Activated B cell treated with CpG ODN at 0.5 μM for 24 hours (primary cell): ENCODE measurements at regions of chr6 and their contacts with region 1.

Region 1: DNA sequence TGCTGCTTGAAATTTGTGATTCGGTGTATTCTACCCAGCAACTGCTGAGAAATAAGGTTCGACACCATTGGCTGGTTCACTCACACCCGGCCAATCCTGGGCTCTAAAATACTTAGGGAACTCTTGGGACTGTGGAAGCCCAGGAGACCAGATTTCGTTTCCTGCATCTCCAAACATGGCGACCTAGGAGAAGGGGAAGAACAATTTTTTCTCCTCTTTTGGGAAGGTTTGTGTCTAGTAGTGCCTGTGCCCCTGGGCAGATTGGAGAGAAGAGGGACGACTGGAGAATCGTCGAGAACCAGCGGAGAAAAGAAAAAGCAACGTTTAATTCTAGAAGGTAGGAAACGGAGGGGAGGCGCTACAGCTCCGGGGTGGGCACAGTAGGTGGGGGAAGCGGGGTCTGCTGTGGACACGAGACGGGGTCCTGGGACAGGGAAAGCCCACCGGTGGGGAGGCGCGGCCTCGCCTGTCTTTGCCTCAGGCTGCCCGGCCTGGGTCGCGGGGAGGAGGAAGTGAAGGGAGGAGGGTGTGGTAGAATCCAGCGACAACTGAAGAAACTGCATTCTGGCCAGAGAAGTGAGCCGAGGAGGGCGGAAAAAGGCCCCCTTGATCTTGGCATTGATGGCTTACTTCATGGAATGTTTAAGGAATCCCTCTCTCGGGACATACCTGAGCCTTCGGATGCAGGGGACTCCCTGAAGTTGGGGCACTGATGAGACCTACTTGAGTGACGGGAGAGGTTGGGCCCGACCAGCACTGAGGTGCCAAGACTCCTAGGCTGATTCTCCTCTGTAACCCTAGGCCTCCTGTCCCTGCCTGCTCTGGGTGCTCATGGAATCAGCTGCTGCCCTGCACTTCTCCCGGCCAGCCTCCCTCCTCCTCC is at the start of gene BTN2A1:
- DNase-seq: peak; percentile 49
- ATAC-seq: peak; percentile 98
- H3K4me3 Mint-ChIP-seq: peak within 1 kb of the TSS; percentile 98
- H3K27ac Mint-ChIP-seq: peak within 1 kb of the TSS; percentile 96
- H3K4me1 Mint-ChIP-seq: peaks cover 70% of the 10 kb centered on the region
- H3K27me3 Mint-ChIP-seq: no peaks in the 10 kb centered on the region
- CTCF ChIP-seq: no peak
- total RNA-seq, gene BTN2A1: 39.7 and 45.1 TPM in 2 replicates

Region 2: GRCh38 chr6:26439657-26440056 is 18.4 kb before region 1 on chr6:
- CTCF ChIA-PET with region 1: no interaction called
- POLR2A ChIA-PET with region 1: interaction called, 4 read pairs
- intact Hi-C with region 1: loop called (anchors 2 kb)
- DNase-seq: no peak
- ATAC-seq: no peak
- H3K4me3 Mint-ChIP-seq: peak overlapping the region; percentile 92
- H3K27ac Mint-ChIP-seq: peak overlapping the region; percentile 90
- H3K4me1 Mint-ChIP-seq: peaks cover 40% of the 10 kb centered on the region
- H3K27me3 Mint-ChIP-seq: no peaks in the 10 kb centered on the region
- CTCF ChIP-seq: no peak

Region 3: DNA sequence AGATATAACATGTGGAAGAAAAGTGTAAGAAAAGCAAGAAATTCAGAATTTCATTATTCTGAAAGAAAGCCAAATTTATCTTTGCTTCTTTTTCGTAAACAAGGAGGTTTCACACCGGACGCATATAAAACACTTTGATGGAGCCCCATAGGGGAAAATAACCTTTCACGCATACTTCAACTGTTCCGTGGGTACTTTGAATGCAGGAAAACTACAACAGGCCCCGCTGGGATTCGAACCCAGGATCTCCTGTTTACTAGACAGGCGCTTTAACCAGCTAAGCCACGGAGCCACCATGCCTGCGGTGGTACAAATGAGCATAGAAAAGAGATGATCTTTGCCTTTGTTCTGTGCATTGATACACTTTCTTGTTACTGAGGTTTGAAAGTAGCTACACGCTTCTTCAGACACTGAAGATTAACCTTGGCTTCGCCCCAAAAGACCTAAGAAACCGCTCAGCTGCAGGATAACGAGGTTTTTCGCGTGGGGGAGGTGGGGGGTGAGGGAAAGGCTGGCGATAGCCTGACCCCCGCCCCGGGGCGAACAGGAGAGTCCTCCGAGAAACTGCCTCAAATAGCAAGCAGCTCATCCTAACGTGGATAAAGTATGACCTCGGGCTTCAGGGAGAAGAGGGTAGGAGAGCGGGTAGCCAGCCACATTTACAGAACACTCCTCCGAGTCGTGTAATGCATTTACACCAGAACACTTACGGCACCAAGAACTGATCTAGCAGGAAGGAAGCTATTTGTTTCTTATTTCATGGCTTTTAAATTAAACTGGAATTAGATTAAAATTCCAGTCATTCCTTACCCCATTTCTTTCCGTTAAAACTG is 74.9 kb after region 1 on chr6:
- CTCF ChIA-PET with region 1: no interaction called
- POLR2A ChIA-PET with region 1: interaction called, 5 read pairs
- intact Hi-C with region 1: loop called (anchors 2 kb)
- DNase-seq: peak; percentile 73
- ATAC-seq: peak; percentile 38
- H3K4me3 Mint-ChIP-seq: peak overlapping the region; percentile 92
- H3K27ac Mint-ChIP-seq: peak overlapping the region; percentile 91
- H3K4me1 Mint-ChIP-seq: peaks cover 47% of the 10 kb centered on the region
- H3K27me3 Mint-ChIP-seq: peaks cover 8% of the 10 kb centered on the region
- CTCF ChIP-seq: no peak

Region 4: DNA sequence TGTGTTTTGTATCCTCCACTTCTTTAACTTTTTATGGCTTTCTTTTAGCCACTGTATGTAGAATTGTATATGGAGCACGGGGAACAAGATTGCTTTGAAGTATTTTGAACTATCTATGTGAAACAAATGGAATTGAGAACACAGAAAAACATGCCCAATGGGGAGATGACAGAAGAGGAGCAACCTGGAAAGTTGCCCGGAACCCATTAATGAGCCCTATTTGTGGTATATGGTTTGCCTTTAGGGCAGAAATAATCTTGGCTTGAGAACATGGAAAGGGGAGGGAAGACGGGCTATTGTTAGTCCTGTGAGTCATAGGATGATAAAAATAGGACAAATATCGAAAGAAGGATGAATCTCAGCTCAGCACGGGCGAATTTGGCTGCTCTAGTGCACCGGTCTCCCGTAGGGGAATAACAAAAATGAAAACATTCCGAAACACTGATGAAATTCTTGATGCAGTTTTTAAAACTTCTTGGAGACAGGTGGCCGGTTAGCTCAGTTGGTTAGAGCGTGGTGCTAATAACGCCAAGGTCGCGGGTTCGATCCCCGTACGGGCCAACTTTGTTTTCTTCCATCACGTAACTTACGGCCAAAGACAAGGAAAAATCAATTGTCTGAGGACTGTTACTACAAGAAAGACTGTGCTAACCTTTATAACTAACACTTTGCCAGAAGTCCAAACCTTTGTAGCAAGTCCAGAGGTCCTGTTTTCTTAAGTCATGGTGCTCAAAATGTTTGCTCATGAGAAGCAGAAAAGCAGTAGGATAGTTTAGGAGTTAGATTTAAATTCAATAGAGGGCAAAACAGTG is 95.8 kb after region 1 on chr6:
- CTCF ChIA-PET with region 1: no interaction called
- POLR2A ChIA-PET with region 1: no interaction called
- intact Hi-C with region 1: no loop called
- DNase-seq: peak; percentile 67
- ATAC-seq: peak; percentile 46
- H3K4me3 Mint-ChIP-seq: no peak overlapping the region
- H3K27ac Mint-ChIP-seq: no peak overlapping the region
- H3K4me1 Mint-ChIP-seq: peaks cover 28% of the 10 kb centered on the region
- H3K27me3 Mint-ChIP-seq: no peaks in the 10 kb centered on the region
- CTCF ChIP-seq: no peak

Region 5: DNA sequence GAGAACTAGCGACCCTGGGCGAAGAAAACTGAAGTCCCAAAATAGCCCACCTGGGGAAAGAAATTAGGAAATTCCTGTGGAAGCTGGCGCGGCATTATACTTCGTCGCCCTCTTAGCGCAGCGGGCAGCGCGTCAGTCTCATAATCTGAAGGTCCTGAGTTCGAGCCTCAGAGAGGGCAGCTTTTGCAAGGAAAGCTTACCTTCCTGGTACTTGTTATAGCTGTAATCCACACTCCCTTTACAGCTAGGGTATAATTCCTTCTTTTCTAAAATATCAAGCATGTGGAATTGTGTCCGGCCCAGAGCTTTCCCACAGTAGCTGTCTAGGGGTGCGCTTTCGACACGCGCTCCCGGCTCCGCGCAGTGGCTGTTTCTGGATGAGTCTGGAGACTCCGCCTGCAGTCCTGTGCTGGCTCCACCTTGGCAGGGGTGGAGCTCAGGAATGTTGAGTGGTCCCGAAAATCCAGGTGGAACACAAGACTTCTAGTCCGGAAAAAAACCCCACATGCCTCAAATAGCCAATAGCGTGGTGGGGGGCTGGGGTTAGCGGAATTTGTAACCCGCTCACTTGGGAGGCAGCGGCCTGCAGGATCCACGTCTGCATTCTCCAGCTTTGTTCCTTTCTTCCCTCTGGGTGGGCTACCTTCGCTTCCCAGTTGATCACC is 285.2 kb after region 1 on chr6:
- CTCF ChIA-PET with region 1: no interaction called
- POLR2A ChIA-PET with region 1: no interaction called
- intact Hi-C with region 1: no loop called
- DNase-seq: no peak
- ATAC-seq: no peak
- H3K4me3 Mint-ChIP-seq: no peak overlapping the region
- H3K27ac Mint-ChIP-seq: no peak overlapping the region
- H3K4me1 Mint-ChIP-seq: no peaks in the 10 kb centered on the region
- H3K27me3 Mint-ChIP-seq: peaks cover 39% of the 10 kb centered on the region
- CTCF ChIP-seq: no peak